ENCODE measurements at regions of chr15 and their contacts with region 1.

Region 1: DNA sequence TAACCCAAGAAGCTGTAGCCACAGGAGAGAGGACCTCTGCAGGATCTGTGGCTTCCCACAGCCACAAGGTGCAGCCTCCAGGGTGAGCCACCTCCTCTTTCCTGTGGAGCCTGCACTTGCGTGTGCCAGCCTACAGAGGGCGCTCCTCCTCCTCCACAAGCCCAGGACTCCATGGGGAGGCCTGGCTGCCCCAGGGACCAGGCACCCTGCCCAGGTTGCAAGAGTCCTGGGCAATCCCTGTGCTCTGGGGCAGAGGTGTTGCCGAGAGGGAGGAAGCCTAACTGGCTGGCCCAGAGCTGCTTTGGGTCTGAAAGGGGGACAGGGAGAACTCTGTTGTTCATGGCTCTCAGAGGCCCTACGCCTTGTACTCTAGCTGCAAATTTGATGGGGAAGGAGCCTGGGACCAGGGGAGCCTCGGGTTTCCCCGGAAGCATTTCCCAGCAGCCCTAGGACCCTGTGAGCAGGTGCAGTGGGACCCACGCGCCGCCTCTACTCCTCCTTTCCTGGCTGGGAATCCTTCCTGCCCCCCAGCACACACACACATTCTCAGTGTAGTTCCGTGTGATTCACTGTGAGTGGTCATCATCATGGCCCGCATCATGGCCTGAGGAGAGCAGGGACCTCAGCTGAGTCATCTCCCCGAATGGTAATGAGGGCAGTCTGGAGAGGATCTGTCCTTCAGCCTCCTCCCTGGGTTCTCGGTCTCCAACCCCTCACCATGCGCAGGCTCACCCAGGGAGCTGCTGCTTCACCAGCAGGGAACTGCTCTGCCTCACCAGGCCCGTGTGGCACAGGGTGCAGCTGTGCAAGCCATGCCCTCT is 24.3 kb downstream of the TBC1D21 start:
- DNase-seq: peak; percentile 59
- H3K4me3 Mint-ChIP-seq: no peak overlapping the region
- H3K27ac Mint-ChIP-seq: no peak overlapping the region
- H3K4me1 Mint-ChIP-seq: no peaks in the 10 kb centered on the region
- H3K27me3 Mint-ChIP-seq: peaks cover 5% of the 10 kb centered on the region

Region 2: GRCh38 chr15:73908030-73908821 is 10.6 kb after region 1 on chr15:
- intact Hi-C with region 1: loop called (anchors 1 kb)
- DNase-seq: peak; percentile 62
- H3K4me3 Mint-ChIP-seq: no peak overlapping the region
- H3K27ac Mint-ChIP-seq: no peak overlapping the region
- H3K4me1 Mint-ChIP-seq: peaks cover 13% of the 10 kb centered on the region
- H3K27me3 Mint-ChIP-seq: no peaks in the 10 kb centered on the region

Region 3: GRCh38 chr15:73927476-73928240 is 30.0 kb after region 1 on chr15:
- intact Hi-C with region 1: loop called (anchors 1 kb)
- DNase-seq: peak; percentile 68
- H3K4me3 Mint-ChIP-seq: peak overlapping the region; percentile 77
- H3K27ac Mint-ChIP-seq: peak overlapping the region; percentile 11
- H3K4me1 Mint-ChIP-seq: peaks cover 39% of the 10 kb centered on the region
- H3K27me3 Mint-ChIP-seq: peaks cover 9% of the 10 kb centered on the region

Region 4: DNA sequence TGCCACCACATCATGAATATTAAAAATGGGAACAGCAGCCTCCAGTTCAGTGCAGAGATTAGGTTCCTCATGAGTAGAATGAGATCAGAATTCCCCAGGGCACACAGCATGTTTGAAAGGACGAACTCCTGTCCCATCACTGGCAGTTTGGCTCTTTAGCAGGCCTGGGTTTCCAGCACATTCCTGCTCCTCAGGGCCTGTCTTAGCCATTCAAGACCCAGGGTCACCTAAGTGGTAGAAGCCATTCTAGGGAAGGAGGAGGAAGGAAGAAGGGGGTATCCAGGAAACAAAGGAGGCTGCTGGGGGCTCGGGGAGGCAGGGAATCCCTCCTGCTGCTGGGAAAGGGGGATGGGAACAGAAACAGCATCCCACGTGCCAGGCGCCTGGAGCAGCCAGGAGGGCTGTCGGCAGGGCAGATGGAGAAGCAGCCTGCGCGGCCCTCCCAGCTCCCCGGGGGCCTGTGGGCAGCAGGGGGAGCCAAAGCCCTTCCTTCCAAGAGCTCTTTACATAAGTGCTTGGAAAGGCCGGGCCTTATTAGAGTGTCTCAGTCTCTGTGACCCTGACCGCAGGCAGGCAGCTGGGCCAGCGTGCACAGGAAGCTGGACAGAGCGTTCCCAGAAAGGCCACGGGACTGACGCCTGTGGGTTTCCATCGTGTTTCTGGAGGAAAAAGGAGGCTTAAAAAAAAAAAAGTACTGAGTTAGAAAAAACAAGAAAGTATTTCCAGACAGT is 53.3 kb after region 1 on chr15:
- intact Hi-C with region 1: loop called (anchors 2 kb)
- DNase-seq: peak; percentile 56
- H3K4me3 Mint-ChIP-seq: no peak overlapping the region
- H3K27ac Mint-ChIP-seq: no peak overlapping the region
- H3K4me1 Mint-ChIP-seq: peaks cover 5% of the 10 kb centered on the region
- H3K27me3 Mint-ChIP-seq: peaks cover 3% of the 10 kb centered on the region

Region 5: DNA sequence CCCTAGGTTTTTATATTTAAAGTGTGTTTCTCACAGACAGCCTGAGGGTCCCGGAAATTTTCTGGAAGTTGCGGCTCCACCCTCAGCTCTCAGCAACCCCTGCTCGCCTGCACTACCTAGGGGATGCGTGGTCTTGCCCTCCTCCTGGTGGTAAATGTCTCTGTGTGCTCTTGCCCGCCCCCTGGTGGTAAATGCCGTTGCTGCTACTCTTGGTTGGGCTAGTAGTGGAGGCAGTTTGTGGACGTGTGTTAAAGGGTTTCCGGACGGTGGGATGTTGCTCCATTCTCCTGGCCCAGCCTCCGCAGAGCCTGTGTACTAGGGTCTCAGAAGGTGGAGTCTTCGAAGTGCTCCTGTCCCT is 67.1 kb after region 1 on chr15:
- intact Hi-C with region 1: loop called (anchors 1 kb)
- DNase-seq: peak; percentile 77
- H3K4me3 Mint-ChIP-seq: peak overlapping the region; percentile 73
- H3K27ac Mint-ChIP-seq: peak overlapping the region; percentile 87
- H3K4me1 Mint-ChIP-seq: peaks cover 37% of the 10 kb centered on the region
- H3K27me3 Mint-ChIP-seq: no peaks in the 10 kb centered on the region

Measured in activated T-helper 1 cell treated with anti-CD3 and anti-CD28 coated beads, Interleukin-12 subunit alpha, Interleukin-12 subunit beta, Interleukin-2, Interleukin-4 antibody, amounts not matched to agents 30 ng/mL and 10 ng/mL and 1 ng/mL, durations not matched to agents 14 hours and 24 hours and 36 hours (primary cell).